ENCODE measurements at regions of chr4 and their contacts with region 1.

Region 1: GRCh38 chr4:25913851-25914669 is at the start of gene SMIM20:
- DNase-seq: peak; percentile 90 to 93 (median 93)
- H3K4me3 ChIP-seq: peak within 1 kb of the TSS; percentile 44 to 78
- H3K4me3 Mint-ChIP-seq: peak within 1 kb of the TSS; percentile 92 to 98 (median 96)
- H3K27ac ChIP-seq: peak within 1 kb of the TSS; percentile 82
- H3K27ac Mint-ChIP-seq: peak within 1 kb of the TSS; percentile 97 to 99 (median 98)
- H3K4me1 ChIP-seq: peaks cover 18% of the 10 kb centered on the region
- H3K4me1 Mint-ChIP-seq: peaks cover 12 to 30% (median 20%) of the 10 kb centered on the region in 4 donors
- H3K27me3 ChIP-seq: no peaks in the 10 kb centered on the region
- H3K27me3 Mint-ChIP-seq: no peaks in the 10 kb centered on the region
- total RNA-seq, gene SMIM20: 16.9 to 19.2 TPM

Region 2: DNA sequence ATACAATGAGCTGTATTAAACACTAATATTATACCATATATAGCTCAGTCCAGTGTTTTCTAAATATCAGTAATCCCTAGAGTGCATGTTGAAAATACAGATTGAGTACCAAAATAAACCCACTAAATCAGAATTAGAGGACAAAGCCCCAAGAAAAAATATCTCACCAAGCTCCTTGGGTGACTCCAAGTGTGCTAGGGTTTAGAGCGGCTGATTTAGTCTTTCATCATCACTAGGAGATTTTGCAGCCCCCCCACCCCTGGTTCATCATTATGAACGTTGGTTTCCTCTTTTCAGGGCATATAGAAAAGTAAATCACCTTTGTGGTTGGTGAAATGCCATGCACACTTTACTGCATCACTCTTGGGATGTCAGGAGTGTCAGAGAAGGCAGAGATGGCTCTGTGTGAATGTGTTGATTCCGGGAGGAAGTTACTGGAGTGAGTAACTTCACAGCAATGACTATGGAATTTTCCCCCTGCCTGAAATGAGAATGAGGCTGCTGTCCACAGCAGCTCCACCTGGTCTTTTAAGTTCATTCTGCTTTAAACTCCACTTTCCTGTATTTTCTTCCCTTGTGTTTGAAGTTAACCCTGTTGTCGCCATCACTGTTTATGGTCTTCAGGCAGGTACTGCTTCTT is 562.2 kb before region 1 on chr4:
- CTCF ChIA-PET with region 1: no interaction called
- POLR2A ChIA-PET with region 1: no interaction called
- intact Hi-C with region 1: no loop called
- DNase-seq: no peak
- H3K4me3 ChIP-seq: no peak overlapping the region
- H3K4me3 Mint-ChIP-seq: no peak overlapping the region
- H3K27ac ChIP-seq: no peak overlapping the region
- H3K27ac Mint-ChIP-seq: no peak overlapping the region
- H3K4me1 ChIP-seq: no peaks in the 10 kb centered on the region
- H3K4me1 Mint-ChIP-seq: no peaks in the 10 kb centered on the region
- H3K27me3 ChIP-seq: no peaks in the 10 kb centered on the region
- H3K27me3 Mint-ChIP-seq: no peaks in the 10 kb centered on the region

Region 3: GRCh38 chr4:25376754-25377571 is 537.1 kb before region 1 on chr4 and contains the start of gene ANAPC4:
- CTCF ChIA-PET with region 1: no interaction called
- POLR2A ChIA-PET with region 1: no interaction called
- intact Hi-C with region 1: loop called (anchors 1 kb)
- DNase-seq: peak; percentile 92 to 97 (median 93)
- H3K4me3 ChIP-seq: peak within 1 kb of the TSS; percentile 57 to 95
- H3K4me3 Mint-ChIP-seq: peak within 1 kb of the TSS in 1 of 8 donors; percentile 80
- H3K27ac ChIP-seq: peak within 1 kb of the TSS; percentile 73
- H3K27ac Mint-ChIP-seq: peak within 1 kb of the TSS; percentile 65 to 92 (median 89)
- H3K4me1 ChIP-seq: peaks cover 24% of the 10 kb centered on the region
- H3K4me1 Mint-ChIP-seq: peaks cover 3 to 13% (median 10%) of the 10 kb centered on the region in 4 donors
- H3K27me3 ChIP-seq: no peaks in the 10 kb centered on the region
- H3K27me3 Mint-ChIP-seq: no peaks in the 10 kb centered on the region
- total RNA-seq, gene ANAPC4: 61.8 to 63.7 TPM

Region 4: GRCh38 chr4:25842229-25842845 is 71.7 kb before region 1 on chr4:
- CTCF ChIA-PET with region 1: interaction called, 6 read pairs
- POLR2A ChIA-PET with region 1: interaction called, 4 read pairs
- intact Hi-C with region 1: loop called (anchors 5 kb)
- DNase-seq: peak in 3 of 5 donors; percentile 36 to 41 (median 41)
- H3K4me3 ChIP-seq: no peak overlapping the region
- H3K4me3 Mint-ChIP-seq: peak overlapping the region in 4 of 8 donors; percentile 18 to 63 (median 30)
- H3K27ac ChIP-seq: no peak overlapping the region
- H3K27ac Mint-ChIP-seq: peak overlapping the region in 6 of 7 donors; percentile 13 to 84 (median 48)
- H3K4me1 ChIP-seq: peaks cover 28% of the 10 kb centered on the region
- H3K4me1 Mint-ChIP-seq: peaks cover 33 to 74% (median 46%) of the 10 kb centered on the region in 4 donors
- H3K27me3 ChIP-seq: no peaks in the 10 kb centered on the region
- H3K27me3 Mint-ChIP-seq: no peaks in the 10 kb centered on the region

Region 5: GRCh38 chr4:25862411-25863346 is 51.4 kb before region 1 on chr4 and contains the start of gene SEL1L3:
- CTCF ChIA-PET with region 1: interaction called, 18 read pairs
- POLR2A ChIA-PET with region 1: interaction called, 56 read pairs
- intact Hi-C with region 1: loop called (anchors 1 kb)
- DNase-seq: peak; percentile 31 to 54 (median 43)
- H3K4me3 ChIP-seq: peak within 1 kb of the TSS; percentile 71 to 74
- H3K4me3 Mint-ChIP-seq: peak within 1 kb of the TSS; percentile 95 to 100 (median 98)
- H3K27ac ChIP-seq: peak within 1 kb of the TSS; percentile 87
- H3K27ac Mint-ChIP-seq: peak within 1 kb of the TSS; percentile 92 to 99 (median 94)
- H3K4me1 ChIP-seq: peaks cover 48% of the 10 kb centered on the region
- H3K4me1 Mint-ChIP-seq: peaks cover 33 to 50% (median 41%) of the 10 kb centered on the region in 4 donors
- H3K27me3 ChIP-seq: no peaks in the 10 kb centered on the region
- H3K27me3 Mint-ChIP-seq: no peaks in the 10 kb centered on the region
- total RNA-seq, gene SEL1L3: 61.4 to 64.3 TPM

Region 6: GRCh38 chr4:26319467-26319948 is 405.4 kb after region 1 on chr4:
- CTCF ChIA-PET with region 1: no interaction called
- POLR2A ChIA-PET with region 1: interaction called, 11 read pairs
- intact Hi-C with region 1: loop called (anchors 1 kb)
- DNase-seq: peak; percentile 96 to 98 (median 96)
- H3K4me3 ChIP-seq: peak overlapping the region; percentile 86
- H3K4me3 Mint-ChIP-seq: peak overlapping the region; percentile 96 to 100 (median 97)
- H3K27ac ChIP-seq: peak overlapping the region; percentile 97
- H3K27ac Mint-ChIP-seq: peak overlapping the region; percentile 98 to 99 (median 99)
- H3K4me1 ChIP-seq: peaks cover 32% of the 10 kb centered on the region
- H3K4me1 Mint-ChIP-seq: peaks cover 21 to 55% (median 32%) of the 10 kb centered on the region in 4 donors
- H3K27me3 ChIP-seq: no peaks in the 10 kb centered on the region
- H3K27me3 Mint-ChIP-seq: peaks cover 0 to 2% of the 10 kb centered on the region in 2 donors

Region 7: DNA sequence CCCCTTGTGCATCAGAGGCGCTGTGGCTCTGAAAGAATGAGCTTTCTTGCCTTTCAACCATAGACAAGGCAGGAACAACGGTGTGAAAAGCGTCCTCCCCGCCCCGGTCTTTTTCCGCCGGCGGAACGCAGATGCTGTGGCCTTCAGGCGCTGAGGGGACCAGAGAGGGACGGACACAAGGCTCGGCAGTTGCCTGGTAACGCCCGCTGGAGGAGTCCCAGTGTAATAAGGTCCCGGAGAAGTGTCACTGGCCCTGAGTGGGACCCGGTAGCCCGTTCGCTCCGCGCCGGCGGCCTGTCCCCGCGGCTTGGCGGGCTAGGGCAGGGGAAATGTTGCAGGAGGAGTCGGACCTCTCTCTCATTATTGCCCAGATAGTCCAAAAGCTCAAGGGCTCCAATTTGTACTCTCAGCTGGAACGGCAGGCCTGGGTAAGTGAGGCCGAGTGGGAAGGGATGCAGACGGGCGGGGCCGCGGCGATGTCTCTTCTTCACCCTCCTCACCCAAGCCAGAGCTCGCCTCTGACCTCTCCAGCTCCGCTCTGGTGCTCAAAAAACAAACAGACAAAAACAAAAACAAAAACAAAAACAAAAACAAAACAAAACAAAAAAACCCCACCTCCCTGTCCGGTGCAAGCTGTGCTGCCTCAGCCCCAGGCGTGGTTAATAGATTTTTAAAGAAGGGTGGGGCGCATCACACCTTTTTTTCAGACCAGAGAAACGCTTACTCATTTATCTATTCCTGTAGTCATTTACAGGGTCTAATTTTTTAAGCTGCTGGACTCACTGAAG is 670.0 kb after region 1 on chr4 and contains the start of gene TBC1D19:
- CTCF ChIA-PET with region 1: no interaction called
- POLR2A ChIA-PET with region 1: interaction called, 11 read pairs
- intact Hi-C with region 1: loop called (anchors 1 kb)
- DNase-seq: peak; percentile 87 to 90 (median 89)
- H3K4me3 ChIP-seq: peak within 1 kb of the TSS; percentile 44 to 75
- H3K4me3 Mint-ChIP-seq: peak within 1 kb of the TSS; percentile 91 to 99 (median 96)
- H3K27ac ChIP-seq: peak within 1 kb of the TSS; percentile 81
- H3K27ac Mint-ChIP-seq: peak within 1 kb of the TSS; percentile 89 to 99 (median 98)
- H3K4me1 ChIP-seq: peaks cover 17% of the 10 kb centered on the region
- H3K4me1 Mint-ChIP-seq: peaks cover 18 to 38% (median 26%) of the 10 kb centered on the region in 4 donors
- H3K27me3 ChIP-seq: no peaks in the 10 kb centered on the region
- H3K27me3 Mint-ChIP-seq: peaks cover 1 to 2% of the 10 kb centered on the region in 2 donors
- total RNA-seq, gene TBC1D19: 7.9 to 9.5 TPM

Measured in CD4-positive, alpha-beta memory T cell (primary cell).